Tibial artery (tissue), 4 donors: ENCODE measurements at regions of chr15 and their contacts with region 1.

Region 1: GRCh38 chr15:74950078-74951000 is 6.2 kb downstream of the RPP25 start:
- DNase-seq: peak; percentile 82 to 83
- H3K4me3 ChIP-seq: no peak overlapping the region
- H3K27ac ChIP-seq: no peak overlapping the region
- H3K4me1 ChIP-seq: peaks cover 0 to 18% (median 13%) of the 10 kb centered on the region in 4 donors
- H3K27me3 ChIP-seq: no peaks in the 10 kb centered on the region
- CTCF ChIP-seq: peak; percentile 95 to 99

Region 2: DNA sequence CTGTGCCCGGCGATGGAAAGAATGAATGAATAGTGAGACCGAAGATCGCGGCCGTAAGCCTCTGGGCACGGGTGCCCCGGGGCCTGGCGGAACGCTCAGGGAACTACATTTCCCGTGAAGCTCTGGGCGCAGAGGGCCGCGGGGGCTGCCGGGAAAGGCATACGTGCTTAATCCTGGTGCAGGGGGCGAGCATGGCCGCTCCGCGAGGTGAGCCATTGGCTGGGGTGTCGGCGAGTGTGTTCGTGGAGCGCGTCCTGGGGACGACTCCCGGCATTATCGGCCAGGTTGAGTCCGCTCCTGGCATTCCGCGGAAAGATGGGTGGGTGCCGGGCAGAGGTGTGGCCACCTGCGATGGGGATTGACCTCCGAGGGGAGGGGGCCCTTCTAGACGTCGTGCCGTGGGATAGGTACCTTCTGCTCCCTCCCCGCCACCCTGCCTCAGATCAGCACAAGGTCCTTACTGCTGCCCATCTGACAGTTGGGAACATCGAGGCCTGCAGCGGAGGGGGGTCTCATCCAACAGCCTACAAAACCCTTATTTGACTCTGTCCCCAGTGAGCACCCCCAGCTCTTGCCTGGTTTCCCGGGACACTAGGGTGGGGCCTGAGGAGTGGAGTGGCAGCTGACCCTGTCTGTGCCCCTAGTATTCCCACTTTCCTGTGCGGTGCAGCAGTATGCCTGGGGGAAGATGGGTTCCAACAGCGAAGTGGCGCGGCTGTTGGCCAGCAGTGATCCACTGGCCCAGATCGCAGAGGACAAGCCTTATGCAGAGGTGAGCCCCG is 60.3 kb before region 1 on chr15 and contains the start of gene MPI:
- intact Hi-C with region 1: loop called (anchors 10 kb)
- DNase-seq: peak; percentile 85 to 90
- H3K4me3 ChIP-seq: peak within 1 kb of the TSS; percentile 85 to 99
- H3K27ac ChIP-seq: peak within 1 kb of the TSS; percentile 91 to 92
- H3K4me1 ChIP-seq: peaks cover 0 to 19% (median 16%) of the 10 kb centered on the region in 4 donors
- H3K27me3 ChIP-seq: no peaks in the 10 kb centered on the region
- CTCF ChIP-seq: peak; percentile 27 to 62